Ovary (tissue), 10 donors: ENCODE measurements at regions of chr14 and their contacts with region 1.

Region 1: GRCh38 chr14:93137864-93138263 is 22.1 kb upstream of the ITPK1 start:
- DNase-seq: peak; percentile 34 to 66 (median 46)
- H3K4me3 ChIP-seq: no peak overlapping the region
- H3K27ac ChIP-seq: no peak overlapping the region
- H3K4me1 ChIP-seq: no peaks in the 10 kb centered on the region
- H3K27me3 ChIP-seq: no peaks in the 10 kb centered on the region
- CTCF ChIP-seq: no peak
- EP300 ChIP-seq: no peak
- POLR2A ChIP-seq: no peak

Region 2: DNA sequence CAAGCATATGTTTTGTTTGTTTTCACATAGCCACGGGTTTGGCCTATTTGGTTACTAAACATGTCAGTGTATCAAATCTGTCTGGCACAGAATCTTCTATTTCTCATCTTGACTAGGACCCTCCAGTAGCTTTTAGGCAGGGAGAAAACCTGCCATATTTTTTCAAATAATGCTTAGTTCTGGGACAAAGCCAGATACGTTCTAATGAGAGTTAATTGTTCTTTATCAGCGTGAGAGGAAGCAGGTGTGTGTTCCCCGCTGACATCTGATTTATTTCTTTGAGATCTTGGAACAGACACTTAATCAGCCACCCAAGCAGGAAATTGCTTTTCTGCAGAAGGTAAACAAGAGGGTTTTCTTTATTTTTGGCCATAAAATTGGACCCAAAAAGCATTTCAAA is 289.0 kb before region 1 on chr14:
- intact Hi-C with region 1: no loop called
- DNase-seq: no peak
- H3K4me3 ChIP-seq: no peak overlapping the region
- H3K27ac ChIP-seq: no peak overlapping the region
- H3K4me1 ChIP-seq: no peaks in the 10 kb centered on the region
- H3K27me3 ChIP-seq: no peaks in the 10 kb centered on the region
- CTCF ChIP-seq: no peak
- EP300 ChIP-seq: no peak
- POLR2A ChIP-seq: no peak

Region 3: GRCh38 chr14:92951912-92952471 is 185.9 kb before region 1 on chr14:
- intact Hi-C with region 1: loop called (anchors 2 to 5 kb)
- DNase-seq: peak; percentile 62 to 87 (median 80)
- H3K4me3 ChIP-seq: no peak overlapping the region
- H3K27ac ChIP-seq: no peak overlapping the region
- H3K4me1 ChIP-seq: no peaks in the 10 kb centered on the region
- H3K27me3 ChIP-seq: no peaks in the 10 kb centered on the region
- CTCF ChIP-seq: peak; percentile 78 to 93 (median 90)
- EP300 ChIP-seq: no peak
- POLR2A ChIP-seq: no peak

Region 4: DNA sequence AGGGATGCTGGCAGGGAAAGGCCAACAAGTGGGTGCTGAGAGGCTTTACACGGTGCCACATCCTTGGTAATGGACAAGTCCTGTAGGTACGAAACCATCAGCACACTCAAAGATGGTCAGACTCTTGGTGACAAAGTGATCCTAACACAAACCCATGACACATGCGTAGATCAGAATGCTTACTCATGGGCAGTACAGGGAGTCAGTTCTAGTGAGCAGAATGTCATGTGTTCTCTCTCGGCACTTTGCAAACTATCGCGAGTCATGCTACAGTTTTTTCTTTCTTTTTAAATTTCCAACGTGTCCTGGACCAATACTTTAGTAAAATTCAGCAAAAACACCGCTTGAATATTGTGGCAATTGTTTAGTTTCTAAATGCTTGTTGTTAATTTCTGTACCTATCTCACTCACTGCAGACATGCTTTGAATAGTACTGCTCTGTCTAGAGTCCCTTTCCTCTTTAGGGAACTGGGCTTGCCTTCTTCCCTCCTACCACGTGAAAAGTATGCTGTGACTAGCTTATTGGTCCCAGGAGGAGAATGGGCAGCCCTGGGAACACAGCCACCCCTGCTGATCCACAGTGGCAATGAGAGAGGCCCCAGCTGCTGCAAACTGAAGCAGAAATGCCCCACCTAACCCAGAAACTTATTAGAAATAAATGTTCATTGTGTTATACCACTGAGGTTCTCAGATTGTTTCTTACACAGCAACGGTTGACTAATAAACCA is 131.6 kb after region 1 on chr14:
- intact Hi-C with region 1: no loop called
- DNase-seq: no peak
- H3K4me3 ChIP-seq: no peak overlapping the region
- H3K27ac ChIP-seq: no peak overlapping the region
- H3K4me1 ChIP-seq: no peaks in the 10 kb centered on the region
- H3K27me3 ChIP-seq: no peaks in the 10 kb centered on the region
- CTCF ChIP-seq: no peak
- EP300 ChIP-seq: no peak
- POLR2A ChIP-seq: no peak